HEK293 (cell line): ENCODE measurements at regions of chr6 and their contacts with region 1.

Region 1: GRCh38 chr6:32933636-32934085 is 7.2 kb downstream of the HLA-DMB start:
- H3K4me3 ChIP-seq: no peak overlapping the region
- H3K27ac ChIP-seq: no peak overlapping the region
- H3K4me1 ChIP-seq: no peaks in the 10 kb centered on the region
- CTCF ChIP-seq: peak; percentile 37; the same call in 1 of the 2 replicates

Region 2: GRCh38 chr6:32885698-32886286 is 47.9 kb before region 1 on chr6:
- CTCF ChIA-PET with region 1: interaction called, 15 read pairs
- POLR2A ChIA-PET with region 1: no interaction called
- H3K4me3 ChIP-seq: no peak overlapping the region
- H3K27ac ChIP-seq: no peak overlapping the region
- H3K4me1 ChIP-seq: peaks cover 4% of the 10 kb centered on the region
- CTCF ChIP-seq: peak; percentile 28

Region 3: DNA sequence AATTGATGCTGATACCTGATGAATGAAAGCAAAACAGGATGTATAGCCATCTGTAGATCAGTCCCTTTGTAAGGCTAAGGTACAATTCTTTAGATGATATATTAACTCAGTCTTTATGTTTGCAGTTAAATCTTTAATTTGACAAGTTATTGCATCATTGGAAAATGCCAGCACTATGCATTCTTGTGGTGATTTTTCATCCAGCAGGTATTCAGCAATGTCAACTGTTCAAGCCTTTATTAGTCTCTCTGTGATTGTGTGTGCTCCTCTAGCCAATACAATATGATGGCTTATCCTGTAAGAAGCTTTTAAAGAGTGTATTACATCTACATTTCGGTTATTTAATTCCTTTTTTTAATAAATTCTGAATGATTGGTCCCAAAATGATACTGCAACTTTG is 27.1 kb before region 1 on chr6:
- CTCF ChIA-PET with region 1: interaction called, 42 read pairs
- POLR2A ChIA-PET with region 1: no interaction called
- H3K4me3 ChIP-seq: no peak overlapping the region
- H3K27ac ChIP-seq: no peak overlapping the region
- H3K4me1 ChIP-seq: peaks cover 11% of the 10 kb centered on the region
- CTCF ChIP-seq: no peak

Region 4: DNA sequence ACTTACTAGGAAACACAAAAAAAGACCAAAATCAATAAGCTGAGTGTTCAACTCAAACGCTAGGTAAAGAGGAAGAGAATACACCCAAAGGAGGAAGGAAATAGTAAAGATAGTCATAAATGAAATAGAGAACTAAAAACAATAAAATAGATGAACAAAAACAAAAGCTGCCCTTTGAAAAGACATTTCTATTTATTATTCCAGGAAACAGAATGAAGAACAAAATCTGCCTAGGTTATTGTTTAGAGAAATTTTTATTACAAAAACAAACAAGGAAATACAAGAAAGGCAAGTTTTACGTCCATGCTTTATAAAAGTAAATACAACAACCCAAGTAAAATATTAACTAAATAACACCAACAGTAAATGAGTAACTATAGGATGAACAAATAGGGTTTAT is 12.9 kb before region 1 on chr6:
- CTCF ChIA-PET with region 1: interaction called, 38 read pairs
- POLR2A ChIA-PET with region 1: no interaction called
- H3K4me3 ChIP-seq: no peak overlapping the region
- H3K27ac ChIP-seq: no peak overlapping the region
- H3K4me1 ChIP-seq: no peaks in the 10 kb centered on the region; the same call in 1 of the 2 replicates
- CTCF ChIP-seq: no peak

Region 5: DNA sequence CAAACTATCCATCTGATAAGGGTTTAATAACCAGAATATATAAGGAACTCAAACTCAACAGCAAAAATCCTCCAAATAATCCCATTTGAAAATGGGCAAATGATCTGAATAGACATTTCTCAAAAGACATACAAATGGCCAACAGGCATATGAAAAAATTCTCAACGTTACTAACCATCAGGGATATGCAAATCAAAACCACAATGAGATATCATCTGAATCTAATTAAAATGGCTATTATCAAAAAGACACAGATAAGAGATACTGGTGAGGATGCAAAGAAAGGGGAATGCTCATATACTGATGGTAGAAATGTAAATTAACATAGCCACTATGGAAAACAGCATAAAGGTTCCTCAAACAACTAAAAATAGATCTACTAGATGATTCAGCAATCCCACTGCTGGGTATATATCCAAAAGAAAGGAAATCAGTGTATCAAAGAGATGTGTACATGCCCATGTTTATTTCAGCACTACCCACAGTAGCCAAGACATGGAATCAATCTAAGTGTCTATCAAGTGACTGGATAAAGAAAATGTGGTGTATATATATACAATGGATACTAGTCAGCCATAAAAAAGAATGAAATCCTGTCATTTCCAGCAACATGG is 28.7 kb after region 1 on chr6:
- CTCF ChIA-PET with region 1: interaction called, 109 read pairs
- POLR2A ChIA-PET with region 1: interaction called, 16 read pairs
- H3K4me3 ChIP-seq: no peak overlapping the region
- H3K27ac ChIP-seq: no peak overlapping the region
- H3K4me1 ChIP-seq: peaks cover 10% of the 10 kb centered on the region
- CTCF ChIP-seq: no peak

Region 6: GRCh38 chr6:33000055-33000454 is 66.4 kb after region 1 on chr6:
- CTCF ChIA-PET with region 1: no interaction called
- POLR2A ChIA-PET with region 1: no interaction called
- H3K4me3 ChIP-seq: no peak overlapping the region
- H3K27ac ChIP-seq: no peak overlapping the region
- H3K4me1 ChIP-seq: no peaks in the 10 kb centered on the region
- CTCF ChIP-seq: peak; percentile 74